Mammary epithelial cell (primary cell): ENCODE measurements at regions of chr5 and their contacts with region 1.

Region 1: DNA sequence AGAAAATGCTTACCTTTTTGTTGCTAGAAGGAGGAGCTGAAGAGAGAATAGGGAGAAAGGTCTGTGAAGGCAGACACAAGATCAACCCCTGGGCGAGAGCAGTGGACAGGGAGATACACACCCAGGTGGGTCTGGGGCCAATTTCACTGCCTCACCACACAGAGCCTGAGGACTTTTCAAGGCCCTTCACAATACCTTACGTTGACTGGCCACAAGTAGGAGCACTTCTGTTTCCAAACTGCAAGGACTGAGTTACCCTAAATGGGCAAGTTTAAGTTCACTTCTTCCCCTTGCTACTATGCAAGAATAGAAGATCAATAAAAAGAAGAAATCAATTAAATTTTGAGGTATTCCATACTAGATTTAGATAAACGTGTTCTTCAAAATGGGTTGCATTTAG is 174.5 kb upstream of the SLC12A2 start:
- DNase-seq: peak; percentile 48
- H3K4me3 ChIP-seq: no peak overlapping the region
- H3K27ac ChIP-seq: no peak overlapping the region
- H3K4me1 ChIP-seq: no peaks in the 10 kb centered on the region
- H3K27me3 ChIP-seq: no peaks in the 10 kb centered on the region
- CTCF ChIP-seq: peak; percentile 78 to 86

Region 2: GRCh38 chr5:127757576-127757975 is 151.5 kb before region 1 on chr5:
- CTCF ChIA-PET with region 1: no interaction called
- dilution Hi-C with region 1: no loop called
- in situ Hi-C with region 1: no loop called
- intact Hi-C with region 1: loop called (anchors 1 kb)
- DNase-seq: peak; percentile 53
- H3K4me3 ChIP-seq: no peak overlapping the region
- H3K27ac ChIP-seq: no peak overlapping the region
- H3K4me1 ChIP-seq: no peaks in the 10 kb centered on the region
- H3K27me3 ChIP-seq: peaks cover 2% of the 10 kb centered on the region
- CTCF ChIP-seq: peak; percentile 43 to 73

Region 3: DNA sequence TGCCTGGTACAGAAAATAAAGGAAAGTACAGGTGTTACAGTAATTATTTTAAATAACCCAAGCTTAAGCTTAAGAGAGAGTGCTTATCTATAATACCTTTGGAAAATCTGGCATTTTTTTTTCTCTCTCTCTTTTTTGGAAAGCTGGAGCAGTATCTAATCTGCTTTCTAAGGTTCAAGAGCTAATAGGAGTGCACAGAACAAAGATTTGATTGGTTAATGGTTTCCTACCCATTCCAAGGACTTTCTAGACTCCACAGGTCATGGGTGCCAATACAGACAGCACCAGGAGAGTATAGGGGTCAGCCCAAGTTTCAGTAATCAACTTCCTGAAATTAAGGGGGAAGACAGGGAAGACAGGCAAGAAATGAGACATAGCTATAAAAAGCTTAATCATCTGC is 70.4 kb after region 1 on chr5:
- CTCF ChIA-PET with region 1: interaction called, 15 read pairs
- dilution Hi-C with region 1: no loop called
- in situ Hi-C with region 1: no loop called
- intact Hi-C with region 1: no loop called
- DNase-seq: no peak
- H3K4me3 ChIP-seq: no peak overlapping the region
- H3K27ac ChIP-seq: no peak overlapping the region
- H3K4me1 ChIP-seq: no peaks in the 10 kb centered on the region
- H3K27me3 ChIP-seq: no peaks in the 10 kb centered on the region
- CTCF ChIP-seq: no peak